ENCODE measurements at regions of chr4 and their contacts with region 1.

Region 1: GRCh38 chr4:93061826-93062225 is 758.1 kb downstream of the GRID2 start:
- DNase-seq: no peak
- ATAC-seq: no peak

Region 2: DNA sequence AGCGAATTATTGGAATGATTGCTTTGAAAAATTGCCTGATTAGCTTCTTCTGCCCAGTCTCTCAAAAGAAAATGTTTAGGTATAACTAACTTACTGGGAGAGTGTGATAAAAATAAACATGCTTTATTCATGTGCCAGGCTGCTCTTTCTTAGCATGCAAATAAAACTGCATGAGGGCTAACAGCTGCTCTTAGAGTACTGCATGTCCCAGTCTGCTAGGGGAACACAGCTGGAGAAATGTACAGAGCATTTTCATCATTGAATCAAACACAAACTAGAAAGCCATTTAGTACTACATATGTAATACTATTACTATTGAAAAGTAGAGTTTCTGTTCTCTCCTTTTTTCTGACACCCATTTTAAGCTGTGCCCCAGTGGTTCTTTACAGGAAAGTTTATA is 32.1 kb before region 1 on chr4:
- intact Hi-C with region 1: no loop called
- DNase-seq: no peak
- ATAC-seq: no peak

Region 3: GRCh38 chr4:94304365-94304971 is 1242.6 kb after region 1 on chr4:
- intact Hi-C with region 1: loop called (anchors 5 kb)
- DNase-seq: no peak
- ATAC-seq: no peak